WTC11 (cell line): ENCODE measurements at regions of chr6 and their contacts with region 1.

Region 1: GRCh38 chr6:36678518-36679027 is at the start of gene CDKN1A:
- DNase-seq: peak; percentile 86
- ATAC-seq: peak; percentile 90
- H3K4me3 Mint-ChIP-seq: peak within 1 kb of the TSS; percentile 92
- H3K27ac Mint-ChIP-seq: peak within 1 kb of the TSS; percentile 81
- H3K4me1 Mint-ChIP-seq: peaks cover 52% of the 10 kb centered on the region
- H3K27me3 Mint-ChIP-seq: peaks cover 35% of the 10 kb centered on the region
- CTCF ChIP-seq: no peak
- total RNA-seq, gene CDKN1A: 35.9 to 75.1 TPM (median 38.1 TPM) in 3 replicates

Region 2: DNA sequence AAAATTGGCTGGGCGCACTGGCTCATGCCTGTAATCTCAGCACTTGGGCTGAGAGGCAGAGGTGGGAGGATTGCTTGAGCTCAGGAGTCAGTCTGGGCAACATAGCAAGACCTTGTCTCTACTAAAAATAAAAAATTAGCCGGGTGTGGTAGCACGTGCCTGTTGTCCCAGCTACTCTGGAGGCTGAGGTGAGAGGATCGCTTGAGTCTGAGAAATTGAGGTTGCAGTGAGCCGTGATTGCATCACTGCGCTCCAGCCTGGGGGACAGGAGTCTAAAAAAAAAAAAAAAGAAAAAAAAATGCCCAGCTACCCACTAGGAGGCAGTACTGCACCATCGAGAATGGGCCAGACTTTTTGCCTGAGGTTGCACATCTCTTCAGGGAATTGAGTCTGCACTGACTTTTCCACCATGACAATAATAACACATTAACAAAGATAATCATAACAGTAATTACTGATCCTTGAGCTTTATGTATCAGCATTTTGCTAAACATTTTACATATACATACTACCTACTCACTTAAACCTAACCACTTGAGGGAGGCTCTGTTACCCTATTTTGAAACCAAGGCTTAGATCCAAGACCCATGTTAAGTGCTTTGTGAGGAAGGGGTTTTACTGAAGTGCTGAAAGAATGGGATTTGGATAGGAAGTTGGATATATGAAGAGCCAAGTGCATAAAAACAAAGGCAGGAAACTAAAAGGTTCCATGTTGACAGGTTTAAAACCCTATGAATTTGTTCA is 63.4 kb before region 1 on chr6:
- CTCF ChIA-PET with region 1: interaction called, 10 read pairs
- POLR2A ChIA-PET with region 1: no interaction called
- DNase-seq: peak; percentile 33
- ATAC-seq: peak; percentile 43
- H3K4me3 Mint-ChIP-seq: no peak overlapping the region
- H3K27ac Mint-ChIP-seq: peak overlapping the region; percentile 74; the same call in 1 of the 2 replicates
- H3K4me1 Mint-ChIP-seq: peaks cover 10% of the 10 kb centered on the region; the same call in 1 of the 2 replicates
- H3K27me3 Mint-ChIP-seq: no peaks in the 10 kb centered on the region
- CTCF ChIP-seq: peak; percentile 74

Region 3: DNA sequence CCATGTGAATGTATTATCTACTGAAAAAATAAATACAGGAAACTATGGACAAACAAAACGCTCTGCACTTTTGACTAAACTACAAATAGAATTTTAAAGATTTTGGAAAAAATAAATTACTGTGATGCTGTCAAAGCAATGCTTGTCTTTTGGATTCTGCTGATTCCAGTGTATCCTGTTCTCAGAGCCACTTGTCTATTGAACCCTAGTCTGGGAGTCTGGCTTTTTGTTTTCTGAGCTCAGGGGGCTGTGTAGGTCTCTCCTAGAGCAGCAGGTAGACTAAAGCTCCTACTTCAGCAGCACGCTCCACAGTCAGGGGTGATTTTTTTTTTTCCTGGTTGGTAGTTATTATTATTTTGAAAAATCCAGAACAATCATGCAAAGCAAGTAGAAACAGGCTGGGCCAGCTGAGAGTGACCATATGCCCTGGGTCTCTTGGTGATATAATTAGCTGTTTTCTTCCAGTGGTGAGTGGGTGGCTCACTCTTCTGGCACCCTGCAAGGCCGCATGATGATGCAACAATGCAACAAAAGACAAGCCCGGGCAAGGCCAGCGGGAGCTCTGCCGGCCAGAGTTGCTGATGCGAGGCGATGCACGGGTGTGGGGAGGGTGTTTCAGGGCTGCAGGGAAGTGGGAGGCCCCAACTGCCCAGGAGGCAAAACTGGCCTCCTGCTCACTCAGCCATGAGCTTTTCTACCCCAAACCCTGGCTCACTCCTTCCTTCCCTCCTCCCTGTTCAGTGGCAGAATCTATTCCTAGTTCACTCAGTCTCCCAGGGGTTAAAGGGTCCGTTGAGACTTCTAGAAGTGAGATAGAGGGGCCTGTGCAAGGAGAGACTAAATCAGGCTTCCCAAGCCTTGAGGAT is 11.6 kb before region 1 on chr6:
- CTCF ChIA-PET with region 1: interaction called, 20 read pairs
- POLR2A ChIA-PET with region 1: interaction called, 12 read pairs
- DNase-seq: peak; percentile 64
- ATAC-seq: peak; percentile 72
- H3K4me3 Mint-ChIP-seq: no peak overlapping the region
- H3K27ac Mint-ChIP-seq: peak overlapping the region; percentile 96
- H3K4me1 Mint-ChIP-seq: peaks cover 58% of the 10 kb centered on the region
- H3K27me3 Mint-ChIP-seq: no peaks in the 10 kb centered on the region; the same call in 1 of the 2 replicates
- CTCF ChIP-seq: no peak

Region 4: GRCh38 chr6:36735110-36736071 is 56.8 kb after region 1 on chr6:
- CTCF ChIA-PET with region 1: no interaction called
- POLR2A ChIA-PET with region 1: no interaction called
- DNase-seq: no peak
- ATAC-seq: peak; percentile 26
- H3K4me3 Mint-ChIP-seq: no peak overlapping the region
- H3K27ac Mint-ChIP-seq: no peak overlapping the region
- H3K4me1 Mint-ChIP-seq: peaks cover 16% of the 10 kb centered on the region
- H3K27me3 Mint-ChIP-seq: no peaks in the 10 kb centered on the region
- CTCF ChIP-seq: no peak